ENCODE measurements at regions of chr2 and their contacts with region 1.

Region 1: GRCh38 chr2:177332041-177332991 is 60.3 kb upstream of the AGPS start:
- DNase-seq: no peak
- H3K4me3 ChIP-seq: peak overlapping the region; percentile 3 to 27 (median 16)
- H3K27ac ChIP-seq: peak overlapping the region; percentile 8 to 58 (median 46)
- H3K4me1 ChIP-seq: peaks cover 0 to 17% (median 14%) of the 10 kb centered on the region in 4 donors
- H3K27me3 ChIP-seq: no peaks in the 10 kb centered on the region
- CTCF ChIP-seq: peak; percentile 65 to 72 (median 66)
- EP300 ChIP-seq: no peak
- POLR2A ChIP-seq: no peak

Region 2: DNA sequence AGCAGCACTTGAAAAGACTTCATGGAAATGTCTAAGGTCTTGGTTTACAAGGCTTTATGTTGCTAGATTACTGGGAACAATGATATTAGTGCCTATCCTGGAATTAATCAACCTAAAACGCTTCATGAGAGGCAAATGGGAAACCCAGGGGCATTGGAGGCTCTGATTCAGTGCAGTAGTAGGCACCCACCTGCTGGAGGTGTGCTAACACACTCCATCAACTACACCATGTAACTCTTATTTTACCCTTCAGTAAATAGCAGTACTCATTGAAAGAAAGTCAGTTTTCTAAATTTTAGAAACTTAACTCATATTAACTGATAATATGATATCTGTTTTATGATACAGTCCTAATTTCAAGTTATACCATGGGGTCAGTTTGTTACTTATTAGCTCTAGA is 137.1 kb before region 1 on chr2:
- intact Hi-C with region 1: no loop called
- DNase-seq: no peak
- H3K4me3 ChIP-seq: no peak overlapping the region
- H3K27ac ChIP-seq: no peak overlapping the region
- H3K4me1 ChIP-seq: peaks cover 0 to 31% (median 20%) of the 10 kb centered on the region in 4 donors
- H3K27me3 ChIP-seq: no peaks in the 10 kb centered on the region
- CTCF ChIP-seq: no peak
- EP300 ChIP-seq: no peak
- POLR2A ChIP-seq: no peak

Region 3: GRCh38 chr2:177263451-177264208 is 68.7 kb before region 1 on chr2:
- intact Hi-C with region 1: loop called (anchors 2 kb)
- DNase-seq: peak; percentile 99
- H3K4me3 ChIP-seq: peak overlapping the region; percentile 92 to 100 (median 96)
- H3K27ac ChIP-seq: peak overlapping the region; percentile 99 to 100 (median 100)
- H3K4me1 ChIP-seq: peaks cover 40 to 55% (median 51%) of the 10 kb centered on the region in 4 donors
- H3K27me3 ChIP-seq: no peaks in the 10 kb centered on the region
- CTCF ChIP-seq: peak; percentile 78 to 92 (median 83)
- EP300 ChIP-seq: peak; percentile 72
- POLR2A ChIP-seq: peak; percentile 44

Region 4: DNA sequence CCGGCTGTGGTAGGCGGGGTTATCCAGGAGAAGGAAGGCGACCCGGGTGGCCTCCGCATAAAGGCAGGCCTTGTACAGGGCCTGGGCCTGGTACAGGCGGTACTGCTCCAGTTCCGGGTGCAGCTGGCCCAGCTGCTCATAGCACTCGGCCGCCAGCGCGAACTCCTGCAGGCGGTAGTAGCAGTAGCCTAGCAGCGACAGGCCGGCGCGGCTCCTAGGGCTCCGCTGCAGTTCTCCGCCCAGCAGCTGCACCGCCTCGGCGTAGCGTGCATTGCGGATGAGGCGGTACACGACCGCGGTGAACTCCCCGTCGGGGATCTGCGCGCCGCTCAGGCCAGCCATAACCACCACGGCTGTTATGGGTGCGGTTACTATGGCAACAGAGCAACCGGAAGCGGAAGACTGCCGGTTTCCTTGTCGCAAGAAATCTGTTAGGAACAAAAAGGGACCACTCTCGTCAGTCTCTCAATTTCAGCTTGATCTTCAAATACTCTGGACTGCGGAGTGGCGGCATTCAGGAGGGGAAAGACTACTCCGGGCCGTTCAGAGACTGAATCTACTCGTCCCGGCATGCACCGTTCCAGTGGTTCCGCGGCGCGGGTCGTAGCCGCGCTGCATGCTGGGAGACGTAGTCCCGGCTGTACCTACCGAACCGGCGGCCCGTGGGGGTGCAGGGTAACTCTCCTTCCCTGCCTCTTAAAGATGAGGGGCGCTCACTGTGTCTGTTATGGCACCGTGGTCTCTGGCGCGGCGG is 220.3 kb after region 1 on chr2:
- intact Hi-C with region 1: loop called (anchors 5 kb)
- DNase-seq: peak; percentile 97
- H3K4me3 ChIP-seq: peak overlapping the region; percentile 74 to 91 (median 82)
- H3K27ac ChIP-seq: peak overlapping the region; percentile 91 to 95 (median 93)
- H3K4me1 ChIP-seq: peaks cover 5 to 15% (median 14%) of the 10 kb centered on the region in 4 donors
- H3K27me3 ChIP-seq: no peaks in the 10 kb centered on the region
- CTCF ChIP-seq: no peak
- EP300 ChIP-seq: no peak
- POLR2A ChIP-seq: no peak

Region 5: DNA sequence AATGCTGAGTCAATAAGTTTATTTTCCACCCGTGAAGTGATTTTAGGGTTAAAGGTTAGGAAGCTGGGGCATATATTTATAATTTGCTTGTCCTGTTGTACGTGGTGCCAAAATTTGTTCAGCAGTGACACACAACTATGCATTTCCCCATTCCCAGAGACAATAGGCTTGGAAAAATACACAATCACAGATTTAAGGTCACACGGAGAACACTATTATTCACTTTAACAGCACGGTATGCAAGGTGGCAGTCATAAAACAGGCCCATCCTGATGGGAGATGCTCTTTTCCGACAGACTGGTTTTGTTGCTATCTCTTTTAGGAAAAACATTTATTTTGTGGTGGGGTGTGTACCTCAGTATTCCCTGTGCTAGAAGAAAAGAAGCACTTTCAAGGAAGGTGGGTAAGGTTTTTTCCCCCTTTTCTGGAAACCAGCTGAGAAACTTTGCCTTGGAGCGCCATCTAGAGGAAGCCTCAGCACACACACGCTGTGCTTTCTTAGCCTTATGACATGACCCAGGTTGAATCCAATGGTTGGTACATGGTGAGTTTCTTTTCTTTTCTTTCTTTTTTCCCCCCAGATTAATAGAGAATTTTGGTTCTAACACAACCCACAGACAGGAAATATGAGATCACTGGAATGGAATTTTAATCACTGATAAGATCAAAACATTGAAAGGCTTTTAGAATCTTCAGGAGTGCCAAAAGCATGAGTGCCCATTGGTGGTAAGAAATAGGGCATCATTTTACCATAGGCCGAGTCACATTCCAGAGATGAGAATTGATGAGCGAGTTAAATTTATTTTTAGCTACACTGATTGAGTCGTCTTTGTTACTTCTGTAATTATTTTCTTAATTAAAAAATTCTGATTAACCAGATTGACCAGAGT is 392.3 kb after region 1 on chr2:
- intact Hi-C with region 1: loop called (anchors 5 kb)
- DNase-seq: no peak
- H3K4me3 ChIP-seq: no peak overlapping the region
- H3K27ac ChIP-seq: no peak overlapping the region
- H3K4me1 ChIP-seq: peaks cover 0 to 7% (median 0%) of the 10 kb centered on the region in 4 donors
- H3K27me3 ChIP-seq: no peaks in the 10 kb centered on the region
- CTCF ChIP-seq: peak; percentile 71 to 84 (median 73)
- EP300 ChIP-seq: no peak
- POLR2A ChIP-seq: no peak

Measured in esophagus muscularis mucosa (tissue), 4 donors.